Testis (tissue), 5 donors: ENCODE measurements at regions of chr1 and their contacts with region 1.

Region 1: DNA sequence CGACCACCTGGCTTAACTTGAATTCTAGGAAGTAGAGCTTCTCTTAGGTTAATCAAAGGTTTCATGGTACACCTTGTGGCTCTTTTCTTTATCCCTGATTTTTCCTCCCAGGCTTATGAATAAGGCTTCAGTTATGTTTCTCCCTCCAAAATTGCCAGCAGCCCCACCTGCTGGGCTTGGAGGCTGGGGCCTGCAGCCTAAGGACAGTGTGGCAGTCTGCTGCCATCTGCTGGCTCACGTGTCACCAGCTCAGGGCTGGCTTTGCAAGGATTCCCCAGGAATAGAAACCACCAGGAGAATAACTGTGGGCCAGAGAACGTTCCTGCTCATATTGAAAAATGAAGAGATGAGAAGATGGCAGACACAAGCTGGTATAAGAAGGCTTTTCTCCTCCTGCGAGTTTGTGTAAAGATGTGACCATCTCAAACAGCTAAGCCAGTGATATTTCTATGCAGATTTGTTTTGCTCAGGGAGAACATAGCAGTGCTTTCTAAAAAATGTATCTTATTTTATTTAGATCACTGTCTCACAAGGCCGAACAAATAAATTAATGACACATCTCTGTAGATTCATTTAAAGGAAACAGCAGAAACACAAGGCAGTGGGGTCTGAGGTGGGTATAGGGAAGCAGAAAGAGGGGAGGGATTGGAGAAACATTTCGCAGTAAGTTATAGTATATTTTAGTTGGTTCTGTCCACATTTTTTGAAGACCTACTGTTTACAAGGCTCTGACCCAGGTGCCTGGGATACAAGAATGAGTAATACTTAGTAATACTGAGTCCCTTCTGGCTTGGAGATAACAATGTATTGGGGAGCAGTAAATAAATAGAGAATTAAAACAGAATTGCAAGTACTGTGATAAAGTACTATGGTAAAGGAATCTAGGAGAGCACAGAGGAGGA is 291.1 kb upstream of the SGIP1 start:
- DNase-seq: peak; percentile 90
- H3K4me3 ChIP-seq: no peak overlapping the region
- H3K27ac ChIP-seq: no peak overlapping the region
- H3K4me1 ChIP-seq: no peaks in the 10 kb centered on the region
- H3K27me3 ChIP-seq: no peaks in the 10 kb centered on the region
- CTCF ChIP-seq: peak; percentile 88 to 95 (median 89)
- POLR2A ChIP-seq: no peak

Region 2: DNA sequence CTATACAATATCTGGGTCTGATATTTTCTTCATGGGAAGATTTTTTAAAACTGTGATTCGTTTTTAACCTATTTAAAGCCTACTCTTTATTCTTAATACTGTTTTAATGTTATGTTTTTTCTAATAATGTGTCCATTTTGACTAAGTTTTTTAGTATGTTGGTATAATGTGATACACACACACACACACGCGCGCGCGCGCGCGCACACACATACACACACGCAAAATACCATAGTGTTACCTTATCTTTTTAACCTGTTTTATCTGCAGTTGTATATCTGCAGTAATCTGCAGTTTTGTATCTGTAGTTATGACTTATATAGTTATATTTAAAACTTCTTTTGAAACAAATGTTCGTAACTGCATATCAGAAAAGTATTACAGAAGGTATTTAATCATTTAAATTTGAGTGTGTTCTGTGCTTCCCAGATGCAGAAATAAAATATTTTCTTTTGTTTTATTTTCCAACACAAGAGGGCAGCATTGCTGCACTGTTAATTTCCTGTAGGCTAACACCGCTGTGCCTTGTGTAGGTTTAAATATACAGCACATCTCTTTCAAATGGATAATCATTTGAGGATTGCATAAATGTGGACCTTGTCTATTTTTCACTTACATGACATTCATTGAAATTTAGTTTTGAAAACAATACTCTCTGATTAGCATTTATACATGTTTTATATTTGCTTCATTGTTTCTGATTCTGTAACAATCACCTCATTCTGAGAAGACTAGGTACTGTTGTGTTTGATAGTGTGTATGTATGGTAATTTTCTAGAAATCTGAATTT is 284.1 kb before region 1 on chr1:
- intact Hi-C with region 1: loop called (anchors 5 kb)
- DNase-seq: no peak
- H3K4me3 ChIP-seq: no peak overlapping the region
- H3K27ac ChIP-seq: no peak overlapping the region
- H3K4me1 ChIP-seq: no peaks in the 10 kb centered on the region
- H3K27me3 ChIP-seq: no peaks in the 10 kb centered on the region
- CTCF ChIP-seq: peak; percentile 60 to 85 (median 71)
- POLR2A ChIP-seq: no peak